ENCODE measurements at regions of chr11 and their contacts with region 1.

Region 1: DNA sequence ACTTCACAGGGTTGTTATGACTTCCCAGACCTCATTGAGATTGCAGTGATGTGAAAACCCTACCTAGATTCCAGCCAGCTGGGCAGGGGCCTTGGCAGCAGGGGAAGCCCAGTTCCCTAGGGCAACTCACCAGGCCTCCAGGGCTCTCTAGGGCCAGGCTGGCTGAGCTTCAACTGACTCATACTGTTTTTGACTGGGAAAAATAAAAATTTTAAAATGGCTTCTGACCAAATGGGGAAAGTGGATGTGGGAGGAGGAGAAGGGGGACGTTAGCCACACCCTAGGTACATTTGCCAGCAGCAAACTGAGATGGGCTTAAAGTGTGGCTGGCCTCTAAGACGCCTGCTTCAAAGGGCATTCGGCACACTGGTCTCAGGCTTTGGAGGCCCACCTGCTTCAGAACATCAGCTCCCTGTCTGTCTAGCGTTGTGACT is 39.0 kb downstream of the BMAL1 start:
- DNase-seq: peak; percentile 87
- ATAC-seq: peak; percentile 80
- H3K4me3 ChIP-seq: no peak overlapping the region
- H3K27ac ChIP-seq: peak overlapping the region in 1 of 2 donors; percentile 23
- H3K4me1 ChIP-seq: no peaks in the 10 kb centered on the region
- H3K27me3 ChIP-seq: no peaks in the 10 kb centered on the region

Region 2: DNA sequence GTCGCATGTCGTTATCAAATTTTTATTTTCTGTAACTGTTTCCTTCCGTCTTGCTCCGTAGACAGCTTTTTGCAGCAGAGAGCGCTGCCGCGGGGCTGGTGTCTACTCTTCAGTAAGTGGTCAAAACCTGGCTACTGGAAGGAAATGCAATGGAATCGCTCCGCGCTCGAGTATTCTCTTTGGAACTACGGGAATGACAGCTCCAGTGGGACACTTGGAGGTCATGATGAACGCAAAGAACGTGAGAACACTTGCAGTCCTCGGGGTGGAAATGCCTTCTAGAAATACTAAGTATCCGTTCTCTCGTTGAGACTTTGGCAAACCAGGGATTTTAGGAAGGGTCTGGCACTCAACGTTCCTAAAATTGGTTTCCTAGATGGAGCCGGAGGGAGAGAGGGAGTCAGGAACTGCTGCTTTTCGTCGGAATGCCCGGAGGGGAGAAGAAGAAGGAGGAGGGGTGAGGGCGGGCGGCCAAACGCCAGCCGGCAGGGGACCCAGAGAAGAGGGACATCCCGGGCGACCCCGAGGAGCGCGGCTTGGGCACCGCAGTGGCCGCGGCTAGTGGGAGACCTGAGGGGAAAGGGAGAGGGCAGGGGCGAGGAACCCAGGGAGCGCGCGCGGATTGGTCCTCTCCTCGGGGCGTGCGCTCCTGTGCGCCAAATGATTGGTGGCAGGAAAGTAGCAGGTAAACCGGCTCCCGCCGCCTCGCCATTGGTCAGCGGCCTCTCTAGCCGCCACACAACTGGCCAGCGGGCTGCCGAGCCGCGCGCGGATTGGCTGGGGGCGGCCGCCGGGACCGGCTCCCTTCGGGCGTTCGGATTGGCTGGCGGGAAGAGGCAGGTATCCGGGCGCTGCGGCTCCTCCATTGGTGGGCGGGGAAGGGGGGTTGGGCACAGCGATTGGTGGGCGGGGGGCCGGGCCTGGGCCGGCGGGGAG is 39.4 kb before region 1 on chr11:
- intact Hi-C with region 1: loop called in 1 of 2 experiments (anchors 2 kb)
- DNase-seq: peak; percentile 99
- ATAC-seq: peak; percentile 97
- H3K4me3 ChIP-seq: peak overlapping the region; percentile 73 to 80
- H3K27ac ChIP-seq: peak overlapping the region in 1 of 2 donors; percentile 72
- H3K4me1 ChIP-seq: peaks cover 0 to 5% of the 10 kb centered on the region in 2 donors
- H3K27me3 ChIP-seq: no peaks in the 10 kb centered on the region